ENCODE measurements at regions of chr2 and their contacts with region 1.

Region 1: DNA sequence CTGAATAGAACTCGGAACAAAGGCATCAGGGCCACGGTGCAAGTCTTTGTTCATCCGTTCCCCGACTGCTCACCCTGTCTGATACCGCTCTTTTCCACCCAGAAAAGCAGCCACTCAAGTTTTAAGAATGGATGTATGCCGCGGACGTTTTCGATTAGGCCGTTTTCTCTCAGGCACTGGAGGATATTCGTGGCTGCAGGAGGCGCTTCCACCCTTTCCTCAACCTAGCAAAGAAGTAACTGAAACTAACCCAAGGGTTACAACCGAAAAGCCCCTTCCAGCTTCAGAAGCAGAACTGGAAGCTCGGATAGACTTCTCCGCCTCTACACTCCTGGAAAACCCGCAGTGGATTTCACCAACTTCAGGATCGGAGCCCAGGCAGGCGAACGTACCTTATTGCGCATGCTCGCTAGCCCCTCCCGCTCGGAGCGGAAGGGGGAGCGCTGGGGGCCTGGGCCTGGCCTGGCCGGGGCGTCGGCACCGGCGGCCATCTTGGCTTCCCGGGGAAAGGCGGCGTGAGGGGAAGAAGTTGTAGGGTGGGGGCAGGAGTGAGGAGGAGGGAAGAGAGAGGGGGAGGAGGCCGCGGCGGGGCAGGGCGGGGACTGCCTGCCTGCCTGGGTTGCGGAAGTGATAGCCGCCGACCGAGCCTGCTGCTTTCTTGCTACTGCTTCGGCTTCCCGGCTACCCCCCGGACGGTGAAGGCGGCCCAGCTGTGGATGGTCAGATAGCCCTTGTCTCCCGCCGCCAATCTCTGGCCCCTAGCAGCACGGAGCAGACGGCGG is at the start of gene ACTR3:
- DNase-seq: peak; percentile 98
- ATAC-seq: peak; percentile 86
- H3K4me3 Mint-ChIP-seq: peak within 1 kb of the TSS; percentile 97
- H3K27ac Mint-ChIP-seq: peak within 1 kb of the TSS; percentile 95
- H3K4me1 Mint-ChIP-seq: peaks cover 61% of the 10 kb centered on the region
- H3K27me3 Mint-ChIP-seq: no peaks in the 10 kb centered on the region
- total RNA-seq, gene ACTR3: 408 to 414 TPM

Region 2: DNA sequence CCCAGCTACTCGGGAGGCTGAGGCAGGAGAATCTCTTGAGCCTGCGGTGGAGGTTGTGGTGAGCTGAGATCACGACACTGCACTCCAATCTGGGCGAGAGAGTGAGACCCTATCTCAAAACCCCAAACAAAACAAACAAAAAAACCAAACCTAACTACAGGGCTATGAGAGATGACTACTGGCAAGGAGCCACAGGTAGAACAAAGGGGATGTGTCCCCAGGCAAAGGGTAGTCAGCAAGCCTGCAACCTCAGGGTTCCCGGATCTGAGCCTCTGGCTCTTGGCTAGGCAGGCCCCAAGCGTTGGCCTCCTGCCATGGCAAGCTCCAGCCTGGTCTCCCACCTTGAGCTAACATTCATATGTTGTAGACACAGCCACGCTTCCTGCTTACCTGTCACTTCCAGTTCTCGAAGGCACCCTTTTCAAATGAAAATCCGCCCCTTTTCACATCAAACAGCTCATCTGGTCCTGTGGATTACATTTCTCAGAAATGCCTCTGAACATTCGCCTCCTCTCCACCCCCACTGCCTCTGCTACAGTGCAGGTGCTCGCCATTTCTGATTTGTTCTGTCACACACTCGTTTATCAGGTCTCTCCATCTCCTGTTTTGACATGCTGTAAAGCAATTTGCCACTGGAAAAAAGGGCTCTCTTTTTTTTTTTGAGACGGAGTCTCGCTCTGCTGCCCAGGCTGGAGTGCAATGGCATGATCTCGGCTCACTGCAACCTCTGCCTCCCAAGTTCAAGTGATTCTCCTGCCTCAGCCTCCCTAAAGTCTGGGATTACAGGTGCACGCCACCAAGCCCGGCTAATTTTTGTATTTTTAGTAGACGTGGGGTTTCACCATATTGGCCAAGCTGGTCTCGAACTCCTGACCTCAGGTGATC is 12.9 kb before region 1 on chr2:
- POLR2A ChIA-PET with region 1: interaction called, 79 read pairs
- DNase-seq: peak; percentile 74
- ATAC-seq: peak; percentile 95
- H3K4me3 Mint-ChIP-seq: peak overlapping the region; percentile 70
- H3K27ac Mint-ChIP-seq: peak overlapping the region; percentile 92
- H3K4me1 Mint-ChIP-seq: peaks cover 47% of the 10 kb centered on the region
- H3K27me3 Mint-ChIP-seq: no peaks in the 10 kb centered on the region

Region 3: GRCh38 chr2:113980946-113981345 is 91.3 kb after region 1 on chr2:
- POLR2A ChIA-PET with region 1: no interaction called
- DNase-seq: no peak
- ATAC-seq: no peak
- H3K4me3 Mint-ChIP-seq: no peak overlapping the region
- H3K27ac Mint-ChIP-seq: no peak overlapping the region
- H3K4me1 Mint-ChIP-seq: peaks cover 5% of the 10 kb centered on the region
- H3K27me3 Mint-ChIP-seq: no peaks in the 10 kb centered on the region

Region 4: GRCh38 chr2:113996671-113997594 is 107.3 kb after region 1 on chr2:
- POLR2A ChIA-PET with region 1: no interaction called
- DNase-seq: no peak
- ATAC-seq: no peak
- H3K4me3 Mint-ChIP-seq: no peak overlapping the region
- H3K27ac Mint-ChIP-seq: no peak overlapping the region
- H3K4me1 Mint-ChIP-seq: peaks cover 4% of the 10 kb centered on the region
- H3K27me3 Mint-ChIP-seq: no peaks in the 10 kb centered on the region

Measured in activated naive CD8-positive, alpha-beta T cell treated with anti-CD3 and anti-CD28 coated beads, Interleukin-2, amount 10 ng/mL, durations not matched to agents 7 days and 5 days (primary cell).